Motor neuron (in vitro differentiated cells): ENCODE measurements at regions of chr13 and their contacts with region 1.

Region 1: DNA sequence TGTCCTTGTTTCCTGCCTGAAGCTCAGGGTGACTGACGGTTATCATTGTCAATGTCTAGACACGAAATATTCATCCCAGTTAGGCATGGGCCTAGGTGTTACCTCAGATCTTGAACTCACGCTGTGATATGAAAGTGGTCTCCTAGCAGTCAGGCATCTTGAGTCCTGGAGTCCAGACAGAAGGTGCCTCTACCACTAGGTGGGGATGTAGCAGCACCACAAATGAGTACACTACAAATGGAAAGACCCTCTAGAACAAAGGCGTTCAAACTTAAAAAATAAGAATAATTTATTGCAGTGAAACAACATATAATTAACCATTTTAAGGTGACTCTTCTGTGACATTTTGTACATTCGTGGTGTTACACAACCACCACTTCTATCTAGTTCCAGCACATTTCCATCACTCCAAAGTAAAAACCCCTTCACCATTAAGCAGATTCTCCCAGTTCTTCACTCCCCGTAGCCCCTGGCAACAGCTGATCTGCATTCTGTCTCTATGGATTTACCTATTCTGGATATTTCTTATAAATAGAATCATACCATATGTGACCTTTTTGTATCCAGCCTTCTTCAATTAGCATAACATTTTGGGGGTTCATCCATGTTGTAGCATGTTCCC is 11.9 kb upstream of the FRY start:
- ATAC-seq: peak in 6 of 8 experiments; percentile 28 to 84 (median 44)
- H3K4me3 ChIP-seq: no peak overlapping the region
- H3K27ac ChIP-seq: no peak overlapping the region
- H3K4me1 ChIP-seq: peaks cover 15 to 19% of the 10 kb centered on the region in 2 donors

Region 2: DNA sequence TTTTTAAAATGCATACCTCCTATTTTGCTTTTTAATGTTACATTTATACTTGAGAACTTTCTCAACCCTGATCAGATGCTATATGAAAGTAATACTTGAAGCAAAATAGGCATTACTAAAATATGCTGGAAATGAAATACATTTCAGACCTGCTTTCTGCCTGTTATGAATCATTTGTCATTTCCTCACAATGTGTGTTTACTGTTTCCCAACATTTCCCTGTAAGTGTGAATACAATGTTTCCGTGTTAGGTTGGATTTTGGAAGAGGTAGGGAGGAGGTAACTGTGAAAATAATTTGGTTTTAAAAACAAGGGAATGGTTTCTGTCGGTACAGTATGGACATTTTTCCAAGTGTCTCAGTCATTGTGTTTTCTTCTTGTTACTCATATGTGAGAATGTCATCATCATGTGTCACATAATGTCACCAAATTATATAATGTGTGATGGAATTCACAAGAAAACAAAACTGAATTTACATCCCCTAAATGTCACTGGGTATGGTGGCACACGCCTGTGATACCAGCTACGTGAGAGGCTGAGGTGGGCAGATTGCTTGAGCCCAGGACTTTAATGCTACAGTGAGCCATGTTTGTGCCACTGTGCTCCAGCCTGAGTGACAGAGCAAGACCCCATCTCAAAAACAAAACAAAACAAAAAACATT is 252.4 kb after region 1 on chr13:
- in situ Hi-C with region 1: no loop called
- ATAC-seq: no peak
- H3K4me3 ChIP-seq: no peak overlapping the region
- H3K27ac ChIP-seq: no peak overlapping the region
- H3K4me1 ChIP-seq: no peaks in the 10 kb centered on the region

Region 3: DNA sequence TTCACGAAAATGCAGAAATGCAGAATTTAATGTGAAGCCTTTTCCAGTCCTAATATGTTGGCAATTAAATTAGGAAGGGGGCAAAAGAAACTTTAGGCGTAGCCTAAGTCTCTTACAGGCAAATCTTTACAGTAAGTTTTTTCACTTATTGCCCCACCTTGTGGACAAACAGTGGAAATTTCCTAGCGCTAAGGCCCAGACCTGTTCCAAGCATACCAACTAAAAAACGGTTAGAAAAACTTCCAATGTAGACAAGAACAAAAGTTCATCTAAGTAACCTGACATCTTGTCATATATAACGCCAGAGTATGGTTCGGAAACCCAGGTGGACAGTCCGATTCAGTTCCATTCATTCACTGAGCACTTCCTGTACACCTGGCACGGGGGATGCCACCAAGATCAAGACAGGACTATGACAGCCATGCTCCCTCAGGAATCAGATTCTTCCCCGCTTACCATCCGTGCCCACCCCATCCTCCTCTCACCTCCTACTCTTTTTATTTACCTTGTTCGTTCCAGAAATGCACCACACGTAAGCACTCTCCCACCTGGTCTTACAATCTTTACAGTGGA is 290.5 kb after region 1 on chr13:
- in situ Hi-C with region 1: loop called in 1 of 9 experiments (anchors 5 kb)
- ATAC-seq: peak; percentile 70 to 86 (median 78)
- H3K4me3 ChIP-seq: no peak overlapping the region
- H3K27ac ChIP-seq: no peak overlapping the region
- H3K4me1 ChIP-seq: peaks cover 4 to 7% of the 10 kb centered on the region in 2 donors